ENCODE measurements at regions of chr17 and their contacts with region 1.

Region 1: GRCh38 chr17:7862692-7863437 is 5.1 kb downstream of the CYB5D1 start:
- DNase-seq: peak; percentile 39
- H3K4me3 Mint-ChIP-seq: no peak overlapping the region
- H3K27ac Mint-ChIP-seq: no peak overlapping the region
- H3K4me1 Mint-ChIP-seq: peaks cover 16% of the 10 kb centered on the region
- H3K27me3 Mint-ChIP-seq: no peaks in the 10 kb centered on the region

Region 2: DNA sequence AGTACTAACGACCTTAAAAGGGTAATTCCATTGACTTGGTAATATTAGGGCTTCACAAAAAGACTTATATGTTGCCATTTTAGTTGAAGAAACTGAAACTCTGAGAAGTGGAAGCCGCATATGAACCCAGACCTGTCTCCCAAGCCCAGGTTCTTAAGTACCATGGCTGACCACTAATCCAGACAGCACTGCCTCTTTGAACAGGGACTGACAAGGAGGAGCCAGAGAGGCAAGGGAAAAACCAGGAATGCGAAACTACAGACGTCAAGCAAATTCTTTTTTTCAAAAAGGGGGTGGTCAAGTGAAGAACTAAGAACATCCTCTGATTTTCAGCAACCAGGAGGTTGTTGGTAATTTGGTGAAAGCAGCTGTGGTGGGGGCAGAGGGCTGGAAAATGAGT is 10.2 kb after region 1 on chr17:
- CTCF ChIA-PET with region 1: interaction called, 26 read pairs
- POLR2A ChIA-PET with region 1: interaction called, 3 read pairs
- intact Hi-C with region 1: no loop called
- DNase-seq: no peak
- H3K4me3 Mint-ChIP-seq: no peak overlapping the region
- H3K27ac Mint-ChIP-seq: no peak overlapping the region
- H3K4me1 Mint-ChIP-seq: peaks cover 12% of the 10 kb centered on the region
- H3K27me3 Mint-ChIP-seq: no peaks in the 10 kb centered on the region

Region 3: DNA sequence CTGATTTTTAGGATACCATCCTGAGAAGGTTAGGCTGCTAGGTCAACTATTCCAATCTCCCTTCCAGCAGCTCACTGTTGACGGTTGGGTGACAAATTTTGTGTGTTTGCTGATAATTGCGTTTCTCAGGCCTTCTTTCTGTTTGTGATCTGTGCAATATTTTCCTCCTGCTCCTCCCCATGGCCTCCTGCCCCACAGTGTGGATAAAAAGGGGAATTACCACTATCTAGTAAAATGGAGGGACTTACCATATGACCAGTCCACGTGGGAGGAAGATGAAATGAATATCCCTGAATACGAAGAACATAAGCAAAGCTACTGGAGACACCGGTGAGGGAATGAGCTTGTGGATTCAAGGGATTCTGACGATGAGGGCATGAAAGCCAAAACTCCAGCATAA is 34.9 kb after region 1 on chr17:
- CTCF ChIA-PET with region 1: interaction called, 37 read pairs
- POLR2A ChIA-PET with region 1: interaction called, 7 read pairs
- intact Hi-C with region 1: no loop called
- DNase-seq: peak; percentile 47
- H3K4me3 Mint-ChIP-seq: no peak overlapping the region
- H3K27ac Mint-ChIP-seq: peak overlapping the region; percentile 73
- H3K4me1 Mint-ChIP-seq: peaks cover 17% of the 10 kb centered on the region
- H3K27me3 Mint-ChIP-seq: no peaks in the 10 kb centered on the region

Region 4: DNA sequence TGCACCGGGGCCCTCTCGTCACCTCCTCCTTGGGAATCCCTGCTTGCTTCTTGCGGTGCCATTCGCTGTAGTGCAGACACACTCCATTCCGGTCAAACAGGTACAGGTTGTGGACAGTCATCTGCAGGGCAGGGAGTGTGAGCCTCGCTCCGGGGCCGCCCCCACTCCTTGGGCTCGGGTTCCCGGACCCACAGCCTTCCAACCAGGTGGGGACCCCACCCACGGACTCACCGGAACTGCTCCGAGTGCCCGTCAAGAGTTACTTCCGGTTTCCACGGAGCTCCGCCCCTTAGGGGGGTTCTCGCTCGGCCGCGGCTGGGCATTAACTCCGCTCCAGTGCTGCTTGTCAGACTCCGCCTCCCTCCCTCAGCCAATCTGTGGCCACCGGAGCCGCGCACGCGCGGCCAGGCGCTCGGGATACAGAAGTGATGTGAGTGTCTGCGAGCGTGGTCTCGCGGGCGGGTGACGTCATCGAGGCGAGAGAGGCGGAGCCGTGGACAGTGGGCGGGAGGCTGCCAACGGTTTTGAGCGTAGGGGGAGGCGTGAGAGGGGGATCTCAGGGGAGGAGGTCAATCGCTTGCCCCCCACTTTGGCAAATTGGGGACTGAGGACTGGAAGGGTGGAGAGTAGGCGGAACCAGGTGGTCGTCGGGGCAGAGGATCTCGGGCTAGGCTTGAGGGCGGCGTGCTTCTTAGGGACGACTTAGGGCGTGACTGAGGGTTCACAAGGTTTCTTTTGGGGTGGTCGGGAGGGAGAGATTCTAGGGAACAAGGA is 69.0 kb after region 1 on chr17 and contains the starts of genes CNTROB and TRAPPC1:
- CTCF ChIA-PET with region 1: interaction called, 16 read pairs
- POLR2A ChIA-PET with region 1: interaction called, 3 read pairs
- intact Hi-C with region 1: no loop called
- DNase-seq: peak; percentile 100
- H3K4me3 Mint-ChIP-seq: peak within 1 kb of the TSS; percentile 93
- H3K27ac Mint-ChIP-seq: peak within 1 kb of the TSS; percentile 88
- H3K4me1 Mint-ChIP-seq: peaks cover 47% of the 10 kb centered on the region
- H3K27me3 Mint-ChIP-seq: no peaks in the 10 kb centered on the region
- total RNA-seq, gene CNTROB: 45.9 to 50.1 TPM
- total RNA-seq, gene TRAPPC1: 197 to 201 TPM

Measured in activated CD4-positive, alpha-beta memory T cell treated with anti-CD3 and anti-CD28 coated beads for 36 hours (primary cell).